SK-MEL-5 (cell line): ENCODE measurements at regions of chr3 and their contacts with region 1.

Region 1: GRCh38 chr3:98022978-98023820 is 11.9 kb downstream of the GABRR3 start:
- DNase-seq: peak; percentile 80

Region 2: GRCh38 chr3:96619475-96619874 is 1403.7 kb before region 1 on chr3:
- in situ Hi-C with region 1: no loop called
- DNase-seq: no peak

Region 3: GRCh38 chr3:97793420-97794019 is 229.7 kb before region 1 on chr3:
- in situ Hi-C with region 1: loop called (anchors 25 kb)
- DNase-seq: peak; percentile 74

Region 4: GRCh38 chr3:98086873-98087272 is 63.7 kb after region 1 on chr3 and contains the start of gene OR5AC2:
- in situ Hi-C with region 1: no loop called
- DNase-seq: no peak
- total RNA-seq, gene OR5AC2: not detected in 2 replicates

Region 5: DNA sequence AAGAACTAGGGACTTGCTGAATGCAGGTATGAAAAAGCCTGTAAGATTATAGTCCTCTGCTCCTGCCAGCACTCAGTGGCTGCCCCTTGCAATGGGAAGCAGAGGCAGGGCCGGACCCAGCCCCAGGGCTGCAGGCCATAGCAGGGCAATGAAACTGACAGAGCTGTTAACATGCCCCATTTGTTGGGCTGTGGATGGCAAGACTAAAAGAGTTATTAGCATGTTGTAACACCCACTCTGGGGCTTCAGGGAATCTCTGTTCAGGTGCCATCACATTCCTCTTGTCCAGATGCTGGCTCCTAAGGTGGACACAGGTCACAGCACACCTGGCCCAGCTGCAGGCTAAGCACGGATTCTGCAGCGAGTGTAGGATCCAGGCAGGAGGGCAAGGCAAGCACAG is 251.7 kb after region 1 on chr3:
- in situ Hi-C with region 1: no loop called
- DNase-seq: no peak